ENCODE measurements at regions of chr4 and their contacts with region 1.

Region 1: GRCh38 chr4:94127707-94128328 is 79.8 kb upstream of the SMARCAD1 start:
- DNase-seq: no peak
- H3K4me3 ChIP-seq: no peak overlapping the region
- H3K27ac ChIP-seq: no peak overlapping the region
- H3K4me1 ChIP-seq: peaks cover 0 to 2% (median 0%) of the 10 kb centered on the region in 4 experiments; a peak in 1 of 7 replicates
- H3K27me3 ChIP-seq: no peaks in the 10 kb centered on the region
- CTCF ChIP-seq: peak in 2 of 3 experiments; percentile 35 to 48; a peak in 2 of 4 replicates
- EP300 ChIP-seq: no peak
- POLR2A ChIP-seq: no peak
- RAD21 ChIP-seq: peak; percentile 59 to 65

Region 2: GRCh38 chr4:93791570-93792195 is 336.1 kb before region 1 on chr4:
- CTCF ChIA-PET with region 1: interaction called, 10 read pairs
- POLR2A ChIA-PET with region 1: no interaction called
- DNase-seq: peak in 1 of 2 experiments; percentile 70
- H3K4me3 ChIP-seq: no peak overlapping the region
- H3K27ac ChIP-seq: no peak overlapping the region
- H3K4me1 ChIP-seq: no peaks in the 10 kb centered on the region; a peak in 1 of 7 replicates
- H3K27me3 ChIP-seq: no peaks in the 10 kb centered on the region
- CTCF ChIP-seq: peak in 2 of 3 experiments; percentile 83 to 84; a peak in 3 of 4 replicates
- EP300 ChIP-seq: no peak
- POLR2A ChIP-seq: no peak
- RAD21 ChIP-seq: peak; percentile 96 to 98

Region 3: GRCh38 chr4:93870876-93871458 is 256.9 kb before region 1 on chr4:
- CTCF ChIA-PET with region 1: no interaction called
- POLR2A ChIA-PET with region 1: no interaction called
- DNase-seq: no peak
- H3K4me3 ChIP-seq: no peak overlapping the region
- H3K27ac ChIP-seq: no peak overlapping the region
- H3K4me1 ChIP-seq: no peaks in the 10 kb centered on the region
- H3K27me3 ChIP-seq: no peaks in the 10 kb centered on the region
- CTCF ChIP-seq: no peak
- EP300 ChIP-seq: no peak
- POLR2A ChIP-seq: no peak
- RAD21 ChIP-seq: no peak

Region 4: DNA sequence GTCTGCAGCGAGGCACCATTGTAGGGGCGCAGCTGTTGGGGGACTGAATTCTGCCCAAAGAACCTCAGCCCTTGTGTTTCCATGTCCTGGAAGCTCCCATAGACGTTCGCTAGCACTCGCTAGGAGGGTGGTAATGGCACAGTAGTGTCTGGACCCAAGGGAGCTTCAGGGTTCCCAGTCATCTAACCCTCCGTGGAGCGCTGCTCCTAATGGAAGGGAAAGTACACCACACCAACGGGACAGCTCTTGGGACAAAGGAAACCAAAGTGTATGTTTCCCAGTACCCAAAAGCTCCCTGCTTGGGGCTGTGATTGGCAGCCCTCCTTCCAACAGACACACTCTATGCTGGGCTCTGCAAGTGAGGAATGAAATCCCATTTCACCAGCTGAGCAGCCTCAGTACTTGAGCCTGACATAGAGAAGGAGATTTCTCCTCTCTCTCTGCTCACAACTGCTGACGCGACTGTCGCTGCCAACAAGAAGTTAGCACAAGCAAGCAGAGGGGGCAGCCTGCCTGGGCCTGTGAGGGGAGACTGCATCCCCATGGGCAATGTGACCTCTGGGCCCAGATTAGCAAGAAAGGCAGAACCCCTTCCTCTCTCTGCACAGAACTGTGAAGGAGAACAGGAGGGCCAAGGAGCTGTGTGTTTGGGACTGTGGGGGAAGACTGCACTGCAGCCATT is 12.3 kb after region 1 on chr4:
- CTCF ChIA-PET with region 1: interaction called, 11 read pairs
- POLR2A ChIA-PET with region 1: no interaction called
- DNase-seq: no peak
- H3K4me3 ChIP-seq: no peak overlapping the region
- H3K27ac ChIP-seq: no peak overlapping the region
- H3K4me1 ChIP-seq: no peaks in the 10 kb centered on the region
- H3K27me3 ChIP-seq: no peaks in the 10 kb centered on the region
- CTCF ChIP-seq: no peak
- EP300 ChIP-seq: no peak
- POLR2A ChIP-seq: no peak
- RAD21 ChIP-seq: no peak

Measured in H1 (cell line).